Activated B cell treated with CpG ODN at 0.5 μM for 24 hours (primary cell): ENCODE measurements at regions of chrX and their contacts with region 1.

Region 1: GRCh38 chrX:119981286-119982070 is 37.9 kb upstream of the NKAP start:
- DNase-seq: no peak
- ATAC-seq: no peak
- H3K4me3 Mint-ChIP-seq: no peak overlapping the region
- H3K27ac Mint-ChIP-seq: no peak overlapping the region
- H3K4me1 Mint-ChIP-seq: no peaks in the 10 kb centered on the region
- H3K27me3 Mint-ChIP-seq: peaks cover 3% of the 10 kb centered on the region
- CTCF ChIP-seq: no peak

Region 2: DNA sequence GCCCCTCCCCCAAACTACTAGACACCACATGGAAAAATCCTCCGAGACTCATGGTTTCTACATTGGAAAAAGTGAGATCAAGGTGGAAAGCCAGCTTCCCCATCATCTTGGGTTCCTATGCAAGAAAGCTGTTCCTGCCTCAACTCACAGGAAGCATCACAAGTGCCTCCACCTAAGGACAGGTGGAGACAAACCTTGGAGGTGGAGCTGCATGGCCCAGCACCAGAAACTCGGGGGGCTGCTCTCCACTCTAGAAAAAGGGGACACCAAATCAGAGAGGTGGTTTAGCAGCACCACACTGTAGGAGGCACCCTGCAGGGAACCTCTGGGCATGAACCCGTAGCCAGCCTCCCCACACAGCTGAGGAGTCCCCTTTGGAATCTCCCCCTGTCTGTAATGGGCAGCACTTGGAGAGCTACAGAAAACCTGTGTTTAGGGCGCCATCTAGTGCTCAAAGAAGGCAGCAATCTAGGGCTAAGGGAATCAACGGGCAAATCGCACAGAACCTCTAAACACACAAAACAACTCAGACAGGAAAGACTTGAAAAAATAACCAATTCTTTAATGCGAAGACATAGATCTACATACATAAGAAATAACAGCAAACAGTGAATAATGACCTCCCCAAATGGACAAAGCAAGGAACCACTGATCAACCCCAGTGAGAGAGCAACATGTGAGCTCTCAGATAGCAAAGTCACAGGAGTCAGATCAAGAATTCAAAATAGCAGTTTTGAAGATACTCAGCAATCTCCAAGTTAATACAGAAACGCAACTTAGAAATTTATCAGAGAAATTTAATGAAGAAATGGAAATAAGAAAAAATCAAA is 232.2 kb after region 1 on chrX:
- CTCF ChIA-PET with region 1: interaction called, 27 read pairs
- POLR2A ChIA-PET with region 1: no interaction called
- intact Hi-C with region 1: loop called (anchors 1 kb)
- DNase-seq: no peak
- ATAC-seq: peak; percentile 69
- H3K4me3 Mint-ChIP-seq: no peak overlapping the region
- H3K27ac Mint-ChIP-seq: no peak overlapping the region
- H3K4me1 Mint-ChIP-seq: peaks cover 3% of the 10 kb centered on the region
- H3K27me3 Mint-ChIP-seq: no peaks in the 10 kb centered on the region
- CTCF ChIP-seq: no peak